ENCODE measurements at regions of chr3 and their contacts with region 1.

Region 1: GRCh38 chr3:102536456-102536855 is 101.6 kb downstream of the ZPLD1 start:
- DNase-seq: no peak
- H3K4me3 ChIP-seq: no peak overlapping the region
- H3K27ac ChIP-seq: no peak overlapping the region
- H3K4me1 ChIP-seq: no peaks in the 10 kb centered on the region
- H3K27me3 ChIP-seq: no peaks in the 10 kb centered on the region
- CTCF ChIP-seq: peak in 1 of 3 donors; percentile 30
- EP300 ChIP-seq: no peak
- POLR2A ChIP-seq: no peak

Region 2: DNA sequence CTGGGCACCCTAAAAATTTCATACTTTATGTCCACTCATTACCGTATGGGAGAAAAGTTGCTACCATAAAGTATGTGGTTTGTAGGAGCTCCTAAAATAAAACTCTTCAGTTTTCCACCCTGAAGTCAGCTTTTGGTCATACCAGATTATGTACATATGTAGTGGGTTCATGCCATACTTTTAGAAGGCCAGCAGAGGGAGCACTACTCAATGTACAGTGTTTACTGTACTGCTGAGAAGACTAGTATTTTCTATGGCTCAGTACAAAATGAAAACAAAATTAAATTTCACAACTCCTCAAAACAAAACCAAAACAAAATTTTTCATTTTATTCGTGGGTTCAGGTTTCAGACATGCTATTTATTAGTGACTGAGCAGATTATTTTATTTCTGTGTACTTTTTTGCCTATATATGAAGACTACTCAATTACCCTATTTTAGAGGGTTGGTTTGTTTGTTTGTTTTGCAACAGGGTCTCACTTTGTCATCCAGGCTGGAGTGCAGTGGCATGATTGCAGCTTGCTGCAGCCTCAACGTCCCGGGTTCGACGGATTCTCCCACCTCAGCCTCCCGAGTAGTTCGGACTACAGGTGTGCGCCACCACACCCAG is 733.2 kb before region 1 on chr3:
- intact Hi-C with region 1: loop called in 1 of 4 experiments (anchors 10 kb)
- DNase-seq: peak in 3 of 5 donors; percentile 21 to 63 (median 30)
- H3K4me3 ChIP-seq: no peak overlapping the region
- H3K27ac ChIP-seq: no peak overlapping the region
- H3K4me1 ChIP-seq: peaks cover 2% of the 10 kb centered on the region
- H3K27me3 ChIP-seq: no peaks in the 10 kb centered on the region
- CTCF ChIP-seq: peak; percentile 42 to 74 (median 65)
- EP300 ChIP-seq: no peak
- POLR2A ChIP-seq: no peak

Region 3: DNA sequence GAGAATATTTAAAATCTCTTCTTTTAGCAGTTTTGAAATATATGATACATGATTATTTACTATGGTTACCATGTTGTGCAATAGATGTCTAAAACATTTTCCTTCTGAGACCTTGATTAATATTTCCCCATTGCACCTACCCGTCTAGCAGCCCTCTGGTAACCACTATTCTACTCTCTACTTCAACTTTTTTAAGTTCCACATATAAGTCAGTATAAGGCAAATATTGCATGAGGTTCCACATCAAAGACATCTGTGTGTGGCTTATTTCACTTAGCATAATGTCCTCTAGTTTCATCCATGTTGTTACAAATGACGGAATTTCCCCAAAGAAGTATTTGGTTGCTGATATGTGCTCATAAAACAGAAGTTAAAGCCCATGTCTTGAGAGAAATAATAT is 716.7 kb before region 1 on chr3:
- intact Hi-C with region 1: loop called in 1 of 4 experiments (anchors 5 kb)
- DNase-seq: no peak
- H3K4me3 ChIP-seq: no peak overlapping the region
- H3K27ac ChIP-seq: no peak overlapping the region
- H3K4me1 ChIP-seq: no peaks in the 10 kb centered on the region
- H3K27me3 ChIP-seq: no peaks in the 10 kb centered on the region
- CTCF ChIP-seq: no peak
- EP300 ChIP-seq: no peak
- POLR2A ChIP-seq: no peak

Region 4: GRCh38 chr3:102229062-102229655 is 307.3 kb before region 1 on chr3:
- intact Hi-C with region 1: loop called in 2 of 4 experiments (anchors 5 kb)
- DNase-seq: peak; percentile 39 to 76 (median 71)
- H3K4me3 ChIP-seq: no peak overlapping the region
- H3K27ac ChIP-seq: no peak overlapping the region
- H3K4me1 ChIP-seq: no peaks in the 10 kb centered on the region
- H3K27me3 ChIP-seq: no peaks in the 10 kb centered on the region
- CTCF ChIP-seq: peak; percentile 61 to 84 (median 73)
- EP300 ChIP-seq: no peak
- POLR2A ChIP-seq: no peak

Region 5: DNA sequence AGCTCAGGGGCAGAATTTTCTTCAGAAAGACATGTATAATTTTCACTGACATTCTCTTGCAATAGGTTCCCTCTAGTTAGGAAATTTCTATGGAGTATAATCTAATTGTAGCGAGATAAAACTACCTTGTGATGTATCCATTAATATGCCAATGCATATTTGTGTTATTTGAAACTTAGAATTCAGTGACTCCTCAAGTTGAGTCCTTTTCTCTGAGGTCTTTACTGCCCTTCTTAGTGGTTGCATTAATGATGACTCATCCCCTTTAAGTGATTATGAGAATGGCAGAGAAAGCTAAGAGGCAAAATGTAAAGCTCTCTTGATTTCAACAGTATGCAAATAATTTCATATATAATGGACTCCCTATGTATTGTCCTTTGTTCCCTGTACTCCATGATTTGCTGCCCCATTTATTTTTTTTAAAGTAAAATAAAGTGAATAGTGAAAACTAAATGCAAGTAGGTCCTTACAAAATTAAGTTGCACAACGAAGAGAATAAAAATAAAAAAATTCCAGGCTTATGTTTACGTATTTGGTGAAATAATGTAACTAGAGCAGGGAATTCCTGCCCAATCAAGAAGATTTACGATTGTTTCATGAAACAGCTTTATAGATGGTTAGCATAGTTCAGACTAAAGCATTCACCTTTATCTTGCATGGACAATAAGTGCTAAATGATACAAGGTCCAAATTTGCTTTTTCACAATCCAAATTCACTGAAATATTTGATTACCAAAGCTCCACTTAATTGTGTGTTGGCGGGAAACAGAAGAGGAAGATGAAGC is 23.5 kb before region 1 on chr3:
- intact Hi-C with region 1: no loop called
- DNase-seq: no peak
- H3K4me3 ChIP-seq: no peak overlapping the region
- H3K27ac ChIP-seq: no peak overlapping the region
- H3K4me1 ChIP-seq: no peaks in the 10 kb centered on the region
- H3K27me3 ChIP-seq: no peaks in the 10 kb centered on the region
- CTCF ChIP-seq: no peak
- EP300 ChIP-seq: no peak
- POLR2A ChIP-seq: no peak

Measured in ovary (tissue), 10 donors.